ENCODE measurements at regions of chr2 and their contacts with region 1.

Region 1: GRCh38 chr2:152025678-152026287 is 73.1 kb downstream of the CACNB4 start:
- DNase-seq: peak; percentile 61 to 77 (median 70)
- H3K4me3 ChIP-seq: peak overlapping the region; percentile 69
- H3K4me3 Mint-ChIP-seq: peak overlapping the region; percentile 31 to 84 (median 82)
- H3K27ac ChIP-seq: no peak overlapping the region
- H3K27ac Mint-ChIP-seq: peak overlapping the region in 3 of 8 donors; percentile 20 to 72 (median 23)
- H3K4me1 ChIP-seq: no peaks in the 10 kb centered on the region
- H3K4me1 Mint-ChIP-seq: peaks cover 6 to 9% (median 9%) of the 10 kb centered on the region in 3 donors
- H3K27me3 ChIP-seq: no peaks in the 10 kb centered on the region
- H3K27me3 Mint-ChIP-seq: peaks cover 4 to 9% of the 10 kb centered on the region in 2 donors

Region 2: DNA sequence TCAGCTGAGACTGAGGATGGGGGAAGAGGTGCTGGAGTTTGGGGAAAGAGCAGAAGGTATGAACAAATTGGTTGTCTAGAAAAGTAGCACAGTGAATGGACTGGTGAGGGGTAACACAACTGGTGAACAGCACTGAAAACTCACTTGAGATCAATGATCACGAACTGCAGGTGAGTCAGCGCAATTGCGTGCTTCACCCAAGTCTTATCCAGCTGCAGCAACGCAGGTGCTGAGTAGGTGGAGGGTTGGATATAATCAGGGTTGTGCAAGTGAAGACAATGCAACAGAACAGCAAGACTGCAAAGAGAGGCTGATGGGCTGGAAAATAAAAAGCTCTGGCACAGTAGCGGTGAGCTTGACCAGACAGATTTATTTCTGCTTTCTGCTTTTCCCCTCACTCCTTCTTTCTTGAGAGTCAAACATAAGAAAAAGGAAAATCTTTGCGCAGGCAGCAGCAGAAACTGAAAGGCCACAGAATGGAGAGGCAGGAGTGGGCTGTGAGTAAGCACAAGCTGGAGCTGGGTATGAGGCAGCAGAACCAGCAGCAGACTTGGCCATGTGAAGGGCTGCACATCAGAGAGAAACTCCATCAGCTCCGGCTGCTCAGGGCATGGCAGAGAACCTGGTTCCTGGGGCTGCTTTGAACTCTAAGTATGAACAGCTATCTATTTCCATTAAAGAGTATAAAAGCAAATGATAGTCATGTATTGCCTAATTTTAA is 98.1 kb before region 1 on chr2:
- CTCF ChIA-PET with region 1: no interaction called
- POLR2A ChIA-PET with region 1: no interaction called
- DNase-seq: no peak
- H3K4me3 ChIP-seq: no peak overlapping the region
- H3K4me3 Mint-ChIP-seq: no peak overlapping the region
- H3K27ac ChIP-seq: no peak overlapping the region
- H3K27ac Mint-ChIP-seq: no peak overlapping the region
- H3K4me1 ChIP-seq: no peaks in the 10 kb centered on the region
- H3K4me1 Mint-ChIP-seq: no peaks in the 10 kb centered on the region
- H3K27me3 ChIP-seq: no peaks in the 10 kb centered on the region
- H3K27me3 Mint-ChIP-seq: peaks cover 15 to 41% of the 10 kb centered on the region in 2 donors

Region 3: DNA sequence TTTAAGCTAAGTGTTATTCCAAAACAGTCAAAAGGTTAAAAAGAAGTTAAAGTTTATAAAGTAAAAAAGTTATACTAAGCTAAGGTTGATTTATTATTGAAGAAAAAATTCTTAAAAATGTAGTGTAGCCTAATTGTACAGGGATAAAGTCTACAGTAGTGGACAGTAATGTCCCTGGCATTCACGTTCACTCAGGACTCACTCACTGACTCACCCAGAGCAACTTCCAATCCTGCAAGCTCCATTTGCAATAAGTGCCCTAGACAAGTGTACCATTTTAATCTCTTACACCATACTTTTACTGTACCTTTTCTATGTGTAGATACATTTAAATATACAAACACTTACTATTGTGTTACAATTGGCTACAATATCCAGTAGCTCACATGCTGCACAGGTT is 13.1 kb before region 1 on chr2:
- CTCF ChIA-PET with region 1: interaction called, 11 read pairs
- POLR2A ChIA-PET with region 1: no interaction called
- DNase-seq: no peak
- H3K4me3 ChIP-seq: no peak overlapping the region
- H3K4me3 Mint-ChIP-seq: no peak overlapping the region
- H3K27ac ChIP-seq: no peak overlapping the region
- H3K27ac Mint-ChIP-seq: no peak overlapping the region
- H3K4me1 ChIP-seq: no peaks in the 10 kb centered on the region
- H3K4me1 Mint-ChIP-seq: no peaks in the 10 kb centered on the region
- H3K27me3 ChIP-seq: peaks cover 5% of the 10 kb centered on the region
- H3K27me3 Mint-ChIP-seq: peaks cover 8 to 38% of the 10 kb centered on the region in 2 donors